Cardiac septum (tissue), 1 donor: ENCODE measurements at regions of chr6 and their contacts with region 1.

Region 1: GRCh38 chr6:12957321-12958051 is 240.9 kb downstream of the PHACTR1 start:
- DNase-seq: peak; percentile 83

Region 2: GRCh38 chr6:12733876-12734275 is 223.6 kb before region 1 on chr6:
- intact Hi-C with region 1: no loop called
- DNase-seq: no peak

Region 3: DNA sequence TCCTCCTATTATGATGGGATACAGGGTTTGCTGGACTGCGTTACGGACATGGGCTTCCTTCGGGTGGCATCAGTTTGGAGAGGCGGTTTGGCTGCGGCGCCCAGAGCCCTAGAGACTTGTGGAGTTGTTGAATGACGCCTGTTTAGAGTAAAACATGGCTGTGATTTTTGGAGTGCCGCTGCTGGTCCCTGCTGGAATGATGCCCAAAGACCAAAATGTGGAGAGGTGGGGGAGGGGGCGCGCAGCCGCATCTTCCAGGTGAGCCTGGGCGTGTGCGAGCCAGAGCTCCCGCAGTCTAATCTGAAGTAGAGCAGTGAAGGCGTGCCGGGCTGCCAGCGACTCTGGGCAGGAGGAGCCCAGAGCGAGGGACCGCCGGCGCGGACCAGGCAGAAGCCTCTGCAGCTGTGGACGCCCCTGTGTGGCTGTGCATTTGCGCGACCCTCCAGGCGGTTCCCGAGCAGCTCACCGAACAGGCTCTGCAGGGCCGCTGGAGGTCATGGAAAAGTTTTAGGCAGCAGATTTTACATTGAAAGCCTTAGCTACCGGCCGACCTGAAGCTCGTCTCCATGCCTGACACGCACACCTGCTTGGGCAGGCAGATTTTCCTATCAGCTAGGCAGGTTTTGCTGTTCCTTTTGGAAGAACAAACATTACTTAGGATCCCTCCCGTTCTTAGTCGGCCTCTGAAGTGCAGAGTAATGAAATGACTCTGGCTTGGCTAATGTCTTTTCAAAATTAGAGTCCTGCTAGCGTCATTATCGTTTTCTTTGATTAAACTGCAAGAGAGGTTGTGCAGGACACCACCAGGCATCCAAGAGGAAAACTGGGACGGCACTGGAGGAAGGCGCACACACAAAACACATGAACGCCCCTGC is 57.3 kb after region 1 on chr6:
- intact Hi-C with region 1: loop called (anchors 5 kb)
- DNase-seq: no peak